HEK293 (cell line): ENCODE measurements at regions of chr1 and their contacts with region 1.

Region 1: GRCh38 chr1:225480825-225481434 is 53.1 kb upstream of the LBR start:
- H3K4me3 ChIP-seq: no peak overlapping the region
- H3K27ac ChIP-seq: no peak overlapping the region
- H3K4me1 ChIP-seq: no peaks in the 10 kb centered on the region
- CTCF ChIP-seq: peak; percentile 93

Region 2: GRCh38 chr1:225467193-225468020 is 13.5 kb before region 1 on chr1:
- CTCF ChIA-PET with region 1: interaction called, 54 read pairs
- POLR2A ChIA-PET with region 1: no interaction called
- H3K4me3 ChIP-seq: no peak overlapping the region
- H3K27ac ChIP-seq: no peak overlapping the region
- H3K4me1 ChIP-seq: peaks cover 21% of the 10 kb centered on the region
- CTCF ChIP-seq: no peak

Region 3: GRCh38 chr1:225508538-225509375 is 27.8 kb after region 1 on chr1:
- CTCF ChIA-PET with region 1: interaction called, 13 read pairs
- POLR2A ChIA-PET with region 1: no interaction called
- H3K4me3 ChIP-seq: no peak overlapping the region; the same call in 1 of the 2 replicates
- H3K27ac ChIP-seq: peak overlapping the region; percentile 53
- H3K4me1 ChIP-seq: peaks cover 36% of the 10 kb centered on the region
- CTCF ChIP-seq: no peak

Region 4: DNA sequence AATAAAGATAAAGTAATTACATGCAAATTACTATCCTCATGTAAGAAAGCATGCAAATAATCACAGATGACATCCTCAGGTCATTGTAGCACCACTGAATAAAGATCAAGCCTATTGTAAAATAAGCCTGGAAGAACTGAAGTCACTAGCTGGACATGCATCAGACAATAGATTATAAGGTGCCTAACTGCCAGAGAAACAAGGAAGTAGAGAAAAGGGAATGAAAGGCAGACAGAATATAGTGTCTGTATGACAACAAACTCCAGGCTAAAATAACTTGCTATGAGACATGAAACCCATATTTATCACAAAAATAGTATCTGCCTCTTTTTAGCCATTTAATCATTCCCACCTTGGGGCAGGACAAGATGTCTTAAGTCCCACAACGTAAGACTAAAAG is 63.3 kb after region 1 on chr1:
- CTCF ChIA-PET with region 1: interaction called, 18 read pairs
- POLR2A ChIA-PET with region 1: no interaction called
- H3K4me3 ChIP-seq: no peak overlapping the region
- H3K27ac ChIP-seq: no peak overlapping the region
- H3K4me1 ChIP-seq: peaks cover 15% of the 10 kb centered on the region
- CTCF ChIP-seq: no peak

Region 5: DNA sequence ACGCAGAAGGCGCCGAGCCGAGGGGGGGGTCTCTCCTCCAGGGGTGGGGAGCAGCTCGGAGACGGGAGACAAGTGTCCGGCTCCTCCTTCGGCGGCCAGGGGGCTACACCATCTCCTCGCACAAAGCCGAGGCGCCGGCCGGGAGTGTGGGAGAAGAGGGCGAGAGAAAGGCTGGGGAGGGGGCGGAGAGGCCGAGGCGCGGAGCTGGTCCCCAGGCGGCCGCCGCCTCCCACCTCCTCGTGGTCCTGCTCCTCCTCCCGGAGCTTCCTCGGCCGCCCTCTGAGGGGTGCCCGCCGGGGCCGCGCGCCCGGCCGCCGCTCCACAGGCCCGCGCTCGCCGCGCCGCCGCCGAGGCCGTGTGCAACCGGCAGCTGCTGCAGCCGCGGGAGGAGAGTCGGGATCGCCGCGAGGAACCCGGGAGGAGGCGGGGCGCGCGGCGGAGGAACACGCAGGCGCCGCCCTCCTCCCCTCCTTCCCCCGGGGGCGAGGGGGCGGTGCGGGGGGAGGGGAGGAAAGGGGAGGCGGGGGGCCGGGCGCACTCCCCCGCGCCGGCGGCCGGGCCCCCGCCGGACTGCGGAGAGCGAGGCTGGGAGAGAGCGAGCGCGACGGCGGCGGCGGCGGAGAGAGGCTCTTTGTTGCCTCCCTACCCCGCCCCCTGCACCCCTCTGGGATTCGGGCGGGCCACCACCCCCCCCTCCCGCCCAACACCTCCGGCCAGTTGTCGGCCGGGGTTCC is 172.0 kb after region 1 on chr1 and contains the start of gene ENAH:
- CTCF ChIA-PET with region 1: interaction called, 14 read pairs
- POLR2A ChIA-PET with region 1: interaction called, 16 read pairs
- H3K4me3 ChIP-seq: peak within 1 kb of the TSS; percentile 92
- H3K27ac ChIP-seq: peak within 1 kb of the TSS; percentile 100
- H3K4me1 ChIP-seq: peaks cover 59% of the 10 kb centered on the region
- CTCF ChIP-seq: peak; percentile 74

Region 6: GRCh38 chr1:225845571-225846259 is 364.8 kb after region 1 on chr1:
- CTCF ChIA-PET with region 1: interaction called, 104 read pairs
- POLR2A ChIA-PET with region 1: interaction called, 6 read pairs
- H3K4me3 ChIP-seq: no peak overlapping the region
- H3K27ac ChIP-seq: no peak overlapping the region; the same call in 1 of the 2 replicates
- H3K4me1 ChIP-seq: no peaks in the 10 kb centered on the region
- CTCF ChIP-seq: peak; percentile 98

Region 7: DNA sequence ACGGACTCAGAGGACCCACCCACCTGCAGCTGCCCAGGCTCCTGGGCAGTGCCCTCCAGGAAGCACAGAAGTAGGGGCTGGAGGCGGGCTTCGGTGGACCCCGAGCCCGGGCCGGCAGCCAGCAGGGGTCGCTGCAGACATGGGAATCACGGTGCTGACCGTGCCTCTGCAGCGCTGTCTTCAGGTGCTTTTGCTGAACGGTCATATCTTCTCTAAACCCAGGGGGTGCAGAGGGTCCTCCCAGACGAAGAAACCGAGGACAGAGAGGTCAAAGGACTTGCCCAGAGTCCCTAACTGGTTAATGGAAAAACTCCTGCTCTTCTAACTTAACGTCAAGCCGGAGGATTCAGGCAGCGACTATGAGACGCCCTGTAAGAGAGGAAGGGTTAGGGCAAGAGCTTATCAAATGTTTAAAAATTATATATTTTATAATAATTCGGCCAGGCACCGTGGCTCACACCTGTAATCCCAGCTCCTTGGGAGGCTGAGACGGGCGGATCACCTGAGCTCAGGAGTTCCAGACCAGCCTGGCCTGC is 481.6 kb after region 1 on chr1:
- CTCF ChIA-PET with region 1: interaction called, 11 read pairs
- POLR2A ChIA-PET with region 1: no interaction called
- H3K4me3 ChIP-seq: no peak overlapping the region
- H3K27ac ChIP-seq: no peak overlapping the region
- H3K4me1 ChIP-seq: no peaks in the 10 kb centered on the region
- CTCF ChIP-seq: peak; percentile 84